Activated CD4-positive, alpha-beta T cell treated with anti-CD3 and anti-CD28 coated beads, Interleukin-2, amount 10 ng/mL, durations not matched to agents 24 days and 14 days (primary cell): ENCODE measurements at regions of chr22 and their contacts with region 1.

Region 1: DNA sequence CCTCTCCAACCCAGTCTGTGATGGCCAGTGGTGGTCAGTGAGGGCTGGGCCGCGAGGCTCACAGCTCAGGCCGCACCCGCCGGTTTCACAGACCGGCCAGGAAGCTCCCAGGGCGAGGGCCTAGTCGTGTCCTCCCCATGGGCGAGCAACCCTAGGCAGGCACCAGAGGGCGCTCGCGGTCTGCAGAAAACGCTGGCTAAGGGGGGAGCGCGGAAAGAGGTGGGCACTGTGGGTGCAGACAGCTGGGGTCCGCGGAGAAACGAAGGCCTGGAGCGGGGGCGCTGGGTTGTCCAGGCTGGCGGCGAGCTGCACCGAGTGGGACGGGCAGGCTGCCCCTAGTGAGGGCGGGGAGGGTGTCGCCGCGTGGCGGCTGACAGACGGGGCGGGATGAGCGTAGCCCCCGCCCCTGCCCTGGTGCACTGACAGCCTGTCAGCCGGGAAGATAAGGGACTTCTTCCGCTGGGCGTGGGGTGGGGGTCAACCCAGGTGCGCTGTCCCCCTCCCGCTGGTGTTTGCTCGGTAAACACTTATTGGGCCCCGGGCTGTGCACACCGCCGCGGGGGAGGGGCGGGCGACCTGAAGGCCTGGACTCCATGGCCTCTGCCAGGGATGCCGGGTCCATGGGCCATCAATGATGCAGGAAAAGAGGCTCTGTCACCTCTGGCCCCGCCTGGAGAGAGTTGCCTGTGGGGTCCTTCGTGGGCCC is 7.5 kb downstream of the GP1BB start:
- DNase-seq: peak; percentile 94
- H3K4me3 Mint-ChIP-seq: peak overlapping the region; percentile 82
- H3K27ac Mint-ChIP-seq: no peak overlapping the region
- H3K4me1 Mint-ChIP-seq: peaks cover 5% of the 10 kb centered on the region
- H3K27me3 Mint-ChIP-seq: peaks cover 5% of the 10 kb centered on the region

Region 2: DNA sequence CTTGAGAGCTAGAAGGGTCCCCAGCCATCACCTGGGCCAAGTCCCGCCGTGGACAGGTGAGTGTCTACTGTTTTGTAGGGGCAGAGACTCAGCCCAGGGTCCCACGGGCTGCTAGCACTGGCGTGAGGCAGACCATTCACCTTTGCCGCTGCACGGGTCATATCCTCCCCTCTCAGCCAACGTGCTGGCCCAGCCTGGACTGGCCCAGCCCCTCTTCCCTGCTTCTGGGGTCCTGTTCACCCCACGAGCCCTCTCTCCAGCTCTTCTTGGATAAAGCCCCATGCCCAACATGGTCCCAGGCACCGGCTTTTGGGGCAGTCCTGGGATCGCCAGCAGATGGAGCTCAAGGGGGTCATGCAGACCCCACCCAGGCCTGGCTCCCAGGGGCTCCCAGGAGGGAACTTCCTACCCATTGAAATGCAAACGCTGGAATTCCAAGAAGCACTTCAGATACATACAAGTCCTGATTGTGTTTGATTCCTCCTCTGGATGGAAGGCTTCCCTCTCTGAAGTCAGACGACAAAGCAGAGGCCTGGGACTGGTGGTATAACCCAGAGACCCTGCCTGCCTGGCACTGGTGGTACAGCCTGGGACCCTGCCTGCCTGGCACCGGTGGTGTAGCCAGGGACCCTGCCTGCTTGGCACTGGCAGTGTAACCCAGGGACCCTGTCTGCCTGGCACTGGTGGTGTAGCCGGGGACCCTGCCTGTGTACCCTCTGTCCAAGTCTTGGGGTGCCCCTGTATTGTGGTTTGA is 25.4 kb before region 1 on chr22:
- intact Hi-C with region 1: no loop called
- DNase-seq: no peak
- H3K4me3 Mint-ChIP-seq: no peak overlapping the region
- H3K27ac Mint-ChIP-seq: no peak overlapping the region
- H3K4me1 Mint-ChIP-seq: no peaks in the 10 kb centered on the region
- H3K27me3 Mint-ChIP-seq: peaks cover 3% of the 10 kb centered on the region

Region 3: DNA sequence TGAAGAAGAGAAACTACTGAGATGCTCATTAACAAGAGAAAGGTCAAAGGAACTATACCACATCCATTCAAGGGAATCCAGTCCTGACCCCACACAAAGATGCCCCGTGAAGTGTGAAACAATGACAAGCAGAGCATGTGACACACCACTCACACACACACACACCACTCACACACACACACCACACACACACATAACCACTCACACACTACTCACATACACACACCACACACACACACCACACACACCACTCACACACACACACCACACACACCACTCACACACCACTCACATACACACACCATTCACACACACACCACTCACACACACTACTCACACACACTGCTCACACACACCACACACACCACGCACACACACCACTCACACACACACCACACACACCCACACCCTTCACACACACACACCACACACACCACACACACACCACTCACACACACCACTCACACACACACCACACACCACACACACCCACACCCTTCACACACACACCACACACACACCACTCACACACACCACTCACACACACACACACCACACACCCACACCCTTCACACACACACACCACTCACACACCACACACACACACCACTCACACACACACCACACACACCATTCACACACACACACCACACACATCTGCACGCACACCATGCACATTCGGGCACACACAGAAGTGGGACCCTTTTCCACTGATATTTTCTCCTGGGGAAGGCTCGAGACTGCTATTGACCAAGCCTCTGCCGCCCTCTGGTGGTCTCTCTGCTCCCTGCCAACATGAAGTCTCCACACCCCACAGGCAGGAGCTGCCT is 178.8 kb after region 1 on chr22:
- intact Hi-C with region 1: loop called (anchors 1 kb)
- DNase-seq: peak; percentile 93
- H3K4me3 Mint-ChIP-seq: no peak overlapping the region
- H3K27ac Mint-ChIP-seq: no peak overlapping the region
- H3K4me1 Mint-ChIP-seq: peaks cover 5% of the 10 kb centered on the region
- H3K27me3 Mint-ChIP-seq: no peaks in the 10 kb centered on the region

Region 4: DNA sequence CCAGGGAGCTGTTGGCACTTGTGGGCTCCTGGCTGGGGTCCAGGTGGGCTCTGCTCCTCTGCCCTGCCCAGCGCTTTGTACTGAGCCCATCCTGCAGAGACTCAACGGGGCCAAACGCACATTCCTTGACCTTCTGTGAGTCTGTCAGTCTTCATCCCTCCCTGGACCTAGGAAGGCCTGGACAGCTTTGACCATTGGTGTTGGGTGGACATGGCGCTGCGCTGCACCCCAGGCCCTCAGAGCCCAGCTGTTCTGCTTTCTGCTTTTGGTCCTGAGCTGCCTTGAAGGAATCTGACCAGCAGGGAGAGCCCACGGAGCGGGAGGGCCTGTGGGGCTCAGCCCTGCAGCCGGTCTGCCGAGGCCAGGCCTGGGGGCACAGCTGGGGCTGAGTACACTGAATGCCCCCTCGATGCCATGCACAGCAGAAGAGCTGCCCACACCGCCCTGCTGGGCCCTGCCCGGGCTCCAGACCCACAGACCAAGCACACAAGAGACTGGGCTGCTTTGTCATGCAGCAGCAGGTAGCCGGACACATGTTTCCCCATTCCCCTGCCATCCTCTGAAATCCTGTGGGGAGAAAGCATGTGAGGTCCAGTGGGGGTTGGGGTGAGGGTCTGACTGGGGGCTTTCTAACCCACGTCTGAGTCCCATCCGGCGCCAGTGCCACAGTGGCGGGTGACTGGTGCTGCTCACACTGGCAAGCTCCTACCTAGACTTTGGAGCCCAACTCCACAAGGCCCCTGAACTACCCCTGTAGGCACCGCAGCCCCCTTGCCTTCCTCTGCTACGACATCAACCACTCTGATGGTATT is 444.2 kb after region 1 on chr22:
- intact Hi-C with region 1: no loop called
- DNase-seq: no peak
- H3K4me3 Mint-ChIP-seq: no peak overlapping the region
- H3K27ac Mint-ChIP-seq: no peak overlapping the region
- H3K4me1 Mint-ChIP-seq: no peaks in the 10 kb centered on the region
- H3K27me3 Mint-ChIP-seq: no peaks in the 10 kb centered on the region